IMR-90 (cell line): ENCODE measurements at regions of chr6 and their contacts with region 1.

Region 1: GRCh38 chr6:114304304-114304887 is 38.4 kb downstream of the HS3ST5 start:
- DNase-seq: peak; percentile 24
- ATAC-seq: peak; percentile 66
- H3K4me3 ChIP-seq: no peak overlapping the region
- H3K27ac ChIP-seq: no peak overlapping the region
- H3K4me1 ChIP-seq: no peaks in the 10 kb centered on the region
- H3K27me3 ChIP-seq: no peaks in the 10 kb centered on the region
- CTCF ChIP-seq: peak; percentile 55
- POLR2A ChIP-seq: no peak
- RAD21 ChIP-seq: peak; percentile 22; the same call in 1 of the 2 replicates

Region 2: GRCh38 chr6:114364289-114364688 is 59.9 kb after region 1 on chr6:
- CTCF ChIA-PET with region 1: interaction called, 10 read pairs
- POLR2A ChIA-PET with region 1: no interaction called
- dilution Hi-C with region 1: no loop called
- in situ Hi-C with region 1: no loop called
- intact Hi-C with region 1: no loop called
- DNase-seq: peak; percentile 78
- ATAC-seq: peak; percentile 98
- H3K4me3 ChIP-seq: no peak overlapping the region
- H3K27ac ChIP-seq: no peak overlapping the region
- H3K4me1 ChIP-seq: no peaks in the 10 kb centered on the region
- H3K27me3 ChIP-seq: no peaks in the 10 kb centered on the region
- CTCF ChIP-seq: no peak
- POLR2A ChIP-seq: no peak
- RAD21 ChIP-seq: no peak